ENCODE measurements at regions of chr19 and their contacts with region 1.

Region 1: GRCh38 chr19:1605236-1606137 is at the start of gene UQCR11:
- DNase-seq: peak; percentile 97
- ATAC-seq: peak; percentile 90
- H3K4me3 Mint-ChIP-seq: peak within 1 kb of the TSS; percentile 85
- H3K27ac Mint-ChIP-seq: peak within 1 kb of the TSS; percentile 97
- H3K4me1 Mint-ChIP-seq: peaks cover 38% of the 10 kb centered on the region
- H3K27me3 Mint-ChIP-seq: no peaks in the 10 kb centered on the region
- CTCF ChIP-seq: peak; percentile 48
- total RNA-seq, gene UQCR11: 231 TPM

Region 2: GRCh38 chr19:1470203-1471009 is 135.1 kb before region 1 on chr19:
- CTCF ChIA-PET with region 1: no interaction called
- POLR2A ChIA-PET with region 1: no interaction called
- intact Hi-C with region 1: no loop called
- DNase-seq: peak; percentile 79
- ATAC-seq: peak; percentile 62
- H3K4me3 Mint-ChIP-seq: peak overlapping the region; percentile 58
- H3K27ac Mint-ChIP-seq: no peak overlapping the region
- H3K4me1 Mint-ChIP-seq: peaks cover 11% of the 10 kb centered on the region
- H3K27me3 Mint-ChIP-seq: peaks cover 13% of the 10 kb centered on the region
- CTCF ChIP-seq: no peak

Region 3: DNA sequence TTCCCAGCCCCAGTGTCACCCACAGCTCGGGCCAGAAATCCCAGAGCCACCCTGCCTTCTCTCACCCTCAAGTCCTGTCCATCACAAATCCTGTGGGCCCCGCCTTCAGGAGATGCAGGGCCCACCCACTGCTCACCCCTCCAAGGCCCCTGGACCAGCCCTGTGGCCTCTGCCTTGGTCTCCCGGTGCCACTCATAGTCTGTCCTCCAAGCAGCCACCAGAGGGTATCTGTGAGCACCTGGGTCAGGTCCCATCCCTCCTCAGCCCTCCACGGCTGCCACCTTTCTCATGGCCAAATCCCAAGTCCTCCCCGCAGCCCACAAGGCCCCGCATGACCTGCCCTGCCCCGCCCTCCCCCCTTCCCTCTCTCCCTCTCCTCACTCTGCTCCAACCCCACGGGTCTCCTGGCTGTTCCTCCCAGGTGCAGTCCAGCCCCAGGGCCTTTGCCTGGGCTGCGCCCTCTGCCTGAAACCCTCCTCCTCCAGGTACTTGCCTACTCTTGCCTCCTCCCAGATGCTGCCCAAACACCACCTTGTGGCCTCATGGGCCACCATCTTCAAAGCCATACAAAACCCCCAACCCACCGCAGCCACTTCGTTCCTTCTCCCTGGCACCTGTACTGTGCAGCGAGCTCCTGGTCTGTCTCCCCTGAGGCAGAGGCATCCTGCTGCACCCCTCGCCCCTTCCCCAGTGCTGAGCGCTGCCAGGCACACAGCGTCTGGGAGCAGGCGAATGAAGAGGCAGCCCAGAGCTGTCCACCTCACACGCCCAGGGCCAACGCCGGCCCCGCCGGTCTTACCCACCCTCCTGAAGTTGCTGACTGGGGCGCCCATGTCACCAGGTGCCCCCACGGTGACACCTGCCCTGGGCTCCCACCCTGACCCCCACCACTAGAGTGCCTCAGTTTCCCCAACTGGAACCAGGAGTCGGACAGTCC is 12.9 kb after region 1 on chr19:
- CTCF ChIA-PET with region 1: interaction called, 4 read pairs
- POLR2A ChIA-PET with region 1: interaction called, 11 read pairs
- intact Hi-C with region 1: no loop called
- DNase-seq: peak; percentile 54
- ATAC-seq: peak; percentile 83
- H3K4me3 Mint-ChIP-seq: no peak overlapping the region
- H3K27ac Mint-ChIP-seq: peak overlapping the region; percentile 60
- H3K4me1 Mint-ChIP-seq: peaks cover 24% of the 10 kb centered on the region
- H3K27me3 Mint-ChIP-seq: no peaks in the 10 kb centered on the region
- CTCF ChIP-seq: peak; percentile 26

Region 4: GRCh38 chr19:1652471-1653299 is 47.2 kb after region 1 on chr19 and contains the start of gene TCF3:
- CTCF ChIA-PET with region 1: no interaction called
- POLR2A ChIA-PET with region 1: interaction called, 12 read pairs
- intact Hi-C with region 1: loop called (anchors 5 kb)
- DNase-seq: peak; percentile 99
- ATAC-seq: peak; percentile 92
- H3K4me3 Mint-ChIP-seq: peak within 1 kb of the TSS; percentile 83
- H3K27ac Mint-ChIP-seq: peak within 1 kb of the TSS; percentile 93
- H3K4me1 Mint-ChIP-seq: peaks cover 24% of the 10 kb centered on the region
- H3K27me3 Mint-ChIP-seq: no peaks in the 10 kb centered on the region
- CTCF ChIP-seq: no peak
- total RNA-seq, gene TCF3: 124 to 126 TPM

Measured in activated CD8-positive, alpha-beta T cell treated with anti-CD3 and anti-CD28 coated beads for 36 hours (primary cell).